ENCODE measurements at regions of chr14 and their contacts with region 1.

Region 1: DNA sequence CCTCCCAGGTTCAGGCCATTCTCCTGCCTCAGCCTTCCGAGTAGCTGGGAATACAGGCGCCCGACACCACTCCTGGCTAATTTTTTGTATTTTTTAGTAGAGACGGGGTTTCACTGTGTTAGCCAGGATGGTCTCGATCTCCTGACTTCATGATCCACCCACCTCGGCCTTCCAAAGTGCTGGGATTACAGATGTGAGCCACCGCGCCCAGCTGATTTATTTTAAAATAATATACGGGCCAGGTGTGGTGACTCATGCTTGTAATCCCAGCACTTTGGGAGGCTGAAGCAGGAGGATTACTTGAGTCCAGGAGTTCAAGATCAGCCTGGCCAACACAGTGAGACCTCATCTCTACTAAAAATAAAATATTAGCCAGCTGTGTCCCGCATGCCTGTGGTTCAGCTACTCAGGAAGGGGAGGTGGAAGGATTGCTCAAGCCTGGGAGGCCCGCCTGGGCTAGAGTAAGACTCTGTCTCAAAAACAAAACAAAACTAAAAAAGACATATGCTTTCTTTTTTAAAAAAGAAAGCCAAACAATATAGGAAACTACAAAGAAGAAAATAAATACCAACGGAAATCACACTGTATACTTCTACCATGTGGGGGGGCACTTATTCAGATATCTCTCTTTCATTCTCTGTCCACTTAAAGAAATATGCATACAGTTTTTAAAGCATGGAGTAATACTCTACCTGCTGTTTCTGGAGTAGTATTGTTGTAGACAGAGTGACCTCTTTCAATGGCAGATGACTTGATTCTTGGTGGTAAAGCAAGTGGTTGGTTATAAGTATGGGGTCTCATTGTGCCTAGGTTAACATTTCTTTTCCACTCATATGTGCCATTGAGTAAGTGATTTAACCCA is 930 bp upstream of the MIA2 start:
- DNase-seq: peak; percentile 46
- ATAC-seq: peak; percentile 25
- H3K4me3 Mint-ChIP-seq: no peak overlapping the region
- H3K27ac Mint-ChIP-seq: peak overlapping the region; percentile 89
- H3K4me1 Mint-ChIP-seq: peaks cover 51% of the 10 kb centered on the region
- H3K27me3 Mint-ChIP-seq: no peaks in the 10 kb centered on the region

Region 2: DNA sequence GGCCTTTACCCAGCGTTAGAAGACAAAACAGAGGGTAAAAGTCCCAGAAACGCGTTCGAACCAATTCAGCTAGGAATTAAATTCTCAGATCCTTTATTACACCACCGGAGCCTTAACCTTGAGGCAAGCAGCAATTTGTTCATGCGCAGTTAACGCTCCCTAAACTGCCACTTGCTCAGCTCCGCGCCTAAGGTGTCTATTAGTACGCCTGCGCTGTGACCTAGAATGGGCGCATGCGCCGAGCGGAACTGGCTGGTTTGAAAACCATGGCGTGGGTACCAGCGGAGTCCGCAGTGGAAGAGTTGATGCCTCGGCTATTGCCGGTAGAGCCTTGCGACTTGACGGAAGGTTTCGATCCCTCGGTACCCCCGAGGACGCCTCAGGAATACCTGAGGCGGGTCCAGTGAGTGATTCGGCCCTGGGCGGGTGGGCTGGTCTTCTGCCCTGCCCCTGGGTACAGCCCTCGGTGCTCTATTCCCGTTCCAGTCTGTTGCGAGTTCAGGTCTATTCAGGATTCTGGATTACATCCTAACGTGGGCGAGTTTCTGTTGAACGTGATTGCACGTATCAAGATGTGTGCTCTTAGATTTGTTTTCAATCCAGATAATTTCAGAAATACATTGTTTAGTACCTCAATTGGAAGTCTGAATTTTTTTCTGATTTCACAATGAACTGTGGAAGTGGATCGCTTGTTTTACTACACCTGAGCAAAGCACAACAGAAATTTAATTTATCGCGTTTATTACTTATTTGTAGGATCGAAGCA is 118.5 kb before region 1 on chr14 and contains the start of gene GEMIN2:
- CTCF ChIA-PET with region 1: interaction called, 10 read pairs
- DNase-seq: peak; percentile 97
- ATAC-seq: peak; percentile 99
- H3K4me3 Mint-ChIP-seq: peak within 1 kb of the TSS; percentile 98
- H3K27ac Mint-ChIP-seq: peak within 1 kb of the TSS; percentile 98
- H3K4me1 Mint-ChIP-seq: peaks cover 35% of the 10 kb centered on the region
- H3K27me3 Mint-ChIP-seq: no peaks in the 10 kb centered on the region
- total RNA-seq, gene GEMIN2: 22.5 to 26.3 TPM

Region 3: DNA sequence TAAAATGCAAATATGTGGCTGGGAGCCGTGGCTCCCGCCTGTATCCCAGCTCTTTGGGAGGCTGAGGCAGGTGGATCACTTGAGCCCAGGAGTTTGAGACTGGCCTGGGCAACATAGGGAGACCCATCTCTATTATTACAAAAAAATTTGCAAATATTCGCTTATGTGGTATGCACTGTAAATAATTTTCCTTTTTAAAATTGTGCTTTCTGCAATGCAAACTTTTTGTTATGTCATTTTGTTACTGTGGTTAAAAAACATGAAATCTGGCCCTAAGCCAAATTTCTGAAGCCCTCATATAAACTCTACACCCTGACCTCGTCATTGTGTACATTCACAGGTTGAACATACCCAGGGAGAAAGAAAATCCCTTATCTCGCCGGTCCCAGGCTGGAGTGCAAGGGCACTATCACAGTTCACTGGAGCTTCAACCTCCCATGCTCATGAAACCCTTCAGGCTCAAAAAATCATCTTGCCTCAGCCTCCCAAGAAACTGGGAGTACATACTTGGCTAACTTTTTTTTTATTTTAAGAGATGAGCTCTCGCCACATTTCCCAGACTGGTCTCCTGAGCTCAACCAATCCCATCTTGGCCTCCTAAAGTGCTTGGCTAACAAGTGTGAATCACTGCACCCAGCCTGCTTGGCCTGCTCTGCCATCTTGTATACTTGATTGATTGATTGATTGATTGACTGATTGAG is 87.4 kb before region 1 on chr14:
- CTCF ChIA-PET with region 1: no interaction called
- DNase-seq: no peak
- ATAC-seq: no peak
- H3K4me3 Mint-ChIP-seq: no peak overlapping the region
- H3K27ac Mint-ChIP-seq: no peak overlapping the region
- H3K4me1 Mint-ChIP-seq: no peaks in the 10 kb centered on the region
- H3K27me3 Mint-ChIP-seq: no peaks in the 10 kb centered on the region

Region 4: DNA sequence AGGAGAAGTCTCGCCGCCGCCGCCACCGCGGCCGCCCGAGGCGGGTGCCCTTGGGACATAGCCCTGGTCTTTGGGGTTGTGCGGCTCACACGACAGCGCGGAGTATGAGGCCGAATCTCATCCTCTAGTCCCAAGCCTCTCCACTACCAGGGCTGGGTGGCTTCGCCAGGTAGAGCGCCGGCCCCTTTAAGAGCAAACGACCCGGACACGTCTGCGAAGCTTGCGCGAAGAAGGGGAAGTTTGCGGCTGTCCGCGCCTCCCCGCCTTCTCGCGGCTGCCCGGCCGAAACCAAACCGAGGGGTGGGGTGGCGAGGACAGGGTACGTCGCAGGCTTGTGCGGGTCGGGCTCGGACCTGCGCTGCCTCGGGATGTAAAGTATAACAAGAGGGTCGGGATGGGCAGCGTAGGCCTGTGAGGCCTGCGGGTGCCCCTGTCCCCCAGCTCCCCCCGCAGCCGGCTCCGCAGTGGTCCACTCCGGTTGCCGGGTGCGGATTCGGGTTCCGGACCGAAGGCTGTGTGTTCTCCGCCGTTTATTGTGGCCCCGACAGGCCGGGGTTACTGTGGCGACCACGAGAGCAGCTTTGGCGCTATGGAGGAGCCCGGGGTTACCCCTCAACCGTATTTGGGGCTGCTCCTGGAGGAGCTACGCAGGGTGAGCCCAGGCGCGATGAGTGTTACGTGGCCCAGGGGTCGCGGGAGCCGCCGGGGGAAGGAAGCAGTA is 34.2 kb after region 1 on chr14:
- CTCF ChIA-PET with region 1: interaction called, 15 read pairs
- DNase-seq: peak; percentile 86
- ATAC-seq: peak; percentile 87
- H3K4me3 Mint-ChIP-seq: peak overlapping the region; percentile 76
- H3K27ac Mint-ChIP-seq: peak overlapping the region; percentile 86
- H3K4me1 Mint-ChIP-seq: peaks cover 37% of the 10 kb centered on the region
- H3K27me3 Mint-ChIP-seq: no peaks in the 10 kb centered on the region

Region 5: GRCh38 chr14:39342768-39343167 is 110.0 kb after region 1 on chr14:
- CTCF ChIA-PET with region 1: interaction called, 11 read pairs
- DNase-seq: no peak
- ATAC-seq: peak; percentile 84
- H3K4me3 Mint-ChIP-seq: no peak overlapping the region
- H3K27ac Mint-ChIP-seq: peak overlapping the region; percentile 2
- H3K4me1 Mint-ChIP-seq: peaks cover 23% of the 10 kb centered on the region
- H3K27me3 Mint-ChIP-seq: no peaks in the 10 kb centered on the region

Region 6: GRCh38 chr14:39381366-39381765 is 148.6 kb after region 1 on chr14:
- CTCF ChIA-PET with region 1: interaction called, 10 read pairs
- DNase-seq: no peak
- ATAC-seq: no peak
- H3K4me3 Mint-ChIP-seq: no peak overlapping the region
- H3K27ac Mint-ChIP-seq: no peak overlapping the region
- H3K4me1 Mint-ChIP-seq: peaks cover 24% of the 10 kb centered on the region
- H3K27me3 Mint-ChIP-seq: no peaks in the 10 kb centered on the region

Region 7: DNA sequence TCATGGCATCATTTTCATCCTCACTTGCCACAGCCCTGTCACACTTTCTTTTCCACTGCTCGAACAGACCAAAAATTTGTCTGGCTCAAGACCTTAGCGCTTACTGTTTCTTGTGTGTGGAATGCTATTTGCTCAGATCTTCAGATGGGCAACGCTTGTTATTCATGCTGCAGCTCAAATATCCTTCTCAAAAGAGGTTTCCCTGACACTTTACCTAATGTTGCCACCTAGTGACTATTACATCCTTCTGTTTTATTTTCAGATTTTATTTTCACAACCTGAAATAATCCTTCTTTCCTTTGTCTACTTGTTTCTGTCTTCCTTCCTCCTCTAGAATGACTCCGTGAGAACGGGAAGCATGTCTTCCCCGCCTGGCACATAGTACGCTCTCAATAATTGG is 193.8 kb after region 1 on chr14:
- CTCF ChIA-PET with region 1: interaction called, 43 read pairs
- DNase-seq: no peak
- ATAC-seq: no peak
- H3K4me3 Mint-ChIP-seq: no peak overlapping the region
- H3K27ac Mint-ChIP-seq: no peak overlapping the region
- H3K4me1 Mint-ChIP-seq: peaks cover 47% of the 10 kb centered on the region
- H3K27me3 Mint-ChIP-seq: no peaks in the 10 kb centered on the region

Region 8: GRCh38 chr14:39432179-39432618 is 199.4 kb after region 1 on chr14 and contains the start of gene FBXO33:
- CTCF ChIA-PET with region 1: interaction called, 43 read pairs
- DNase-seq: peak; percentile 97
- ATAC-seq: peak; percentile 88
- H3K4me3 Mint-ChIP-seq: peak within 1 kb of the TSS; percentile 88
- H3K27ac Mint-ChIP-seq: peak within 1 kb of the TSS; percentile 99
- H3K4me1 Mint-ChIP-seq: peaks cover 37% of the 10 kb centered on the region
- H3K27me3 Mint-ChIP-seq: no peaks in the 10 kb centered on the region
- total RNA-seq, gene FBXO33: 17.5 to 19.9 TPM